Uterus (tissue), 4 donors: ENCODE measurements at regions of chr1 and their contacts with region 1.

Region 1: GRCh38 chr1:13960375-13960987 is 260.5 kb downstream of the PRDM2 start:
- DNase-seq: peak; percentile 60 to 71
- H3K4me3 ChIP-seq: no peak overlapping the region
- H3K27ac ChIP-seq: no peak overlapping the region
- H3K4me1 ChIP-seq: no peaks in the 10 kb centered on the region
- H3K27me3 ChIP-seq: no peaks in the 10 kb centered on the region
- CTCF ChIP-seq: peak; percentile 89 to 94 (median 92)
- POLR2A ChIP-seq: no peak

Region 2: GRCh38 chr1:13667691-13668090 is 292.8 kb before region 1 on chr1:
- intact Hi-C with region 1: loop called (anchors 5 kb)
- DNase-seq: no peak
- H3K4me3 ChIP-seq: no peak overlapping the region
- H3K27ac ChIP-seq: no peak overlapping the region
- H3K4me1 ChIP-seq: no peaks in the 10 kb centered on the region
- H3K27me3 ChIP-seq: no peaks in the 10 kb centered on the region
- CTCF ChIP-seq: no peak
- POLR2A ChIP-seq: no peak

Region 3: GRCh38 chr1:14064649-14065442 is 104.4 kb after region 1 on chr1:
- intact Hi-C with region 1: no loop called
- DNase-seq: no peak
- H3K4me3 ChIP-seq: no peak overlapping the region
- H3K27ac ChIP-seq: no peak overlapping the region
- H3K4me1 ChIP-seq: no peaks in the 10 kb centered on the region
- H3K27me3 ChIP-seq: no peaks in the 10 kb centered on the region
- CTCF ChIP-seq: no peak
- POLR2A ChIP-seq: no peak